ENCODE measurements at regions of chr21 and their contacts with region 1.

Region 1: DNA sequence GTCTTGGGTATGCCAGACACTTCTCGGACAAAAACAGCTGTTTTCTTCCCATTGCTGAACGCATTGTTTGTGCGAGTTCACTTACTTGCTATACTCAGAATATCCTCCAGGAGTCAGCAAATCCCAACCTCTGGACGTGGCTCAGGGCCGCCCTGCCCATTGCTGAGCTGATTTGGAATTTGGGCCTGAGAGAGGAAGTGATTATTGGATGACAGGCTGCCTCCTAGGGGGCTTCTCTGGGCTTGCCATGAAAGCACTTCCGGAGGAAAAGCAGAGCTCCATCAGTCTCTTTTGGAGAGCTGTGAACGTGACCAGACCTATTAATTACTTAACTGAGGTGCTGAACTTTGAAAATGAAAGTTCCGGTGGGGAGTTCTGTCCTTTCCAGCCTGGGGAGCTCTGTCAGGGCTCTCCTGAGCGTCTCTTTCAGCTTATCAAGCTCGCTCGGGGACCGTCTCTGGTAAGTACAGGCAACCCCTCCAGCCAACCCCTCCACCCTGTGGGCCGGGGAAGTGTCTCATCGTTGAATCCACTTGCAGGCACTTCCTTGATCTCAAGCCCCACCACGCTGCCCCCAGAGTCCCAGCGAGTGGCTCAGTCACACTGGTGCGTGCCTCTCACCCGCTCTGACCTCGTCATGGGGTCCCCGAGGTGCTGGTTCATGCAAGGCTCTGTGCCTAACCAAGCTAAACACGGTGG is 76.9 kb downstream of the CLIC6 start:
- DNase-seq: peak; percentile 12 to 77 (median 38)
- ATAC-seq: peak; percentile 73
- H3K4me3 ChIP-seq: no peak overlapping the region
- H3K4me3 Mint-ChIP-seq: peak overlapping the region; percentile 74
- H3K27ac ChIP-seq: no peak overlapping the region
- H3K27ac Mint-ChIP-seq: no peak overlapping the region
- H3K4me1 ChIP-seq: peaks cover 8% of the 10 kb centered on the region
- H3K4me1 Mint-ChIP-seq: peaks cover 5% of the 10 kb centered on the region
- H3K27me3 ChIP-seq: no peaks in the 10 kb centered on the region
- H3K27me3 Mint-ChIP-seq: no peaks in the 10 kb centered on the region
- CTCF ChIP-seq: peak; percentile 88

Region 2: GRCh38 chr21:35342440-35342839 is 596.7 kb after region 1 on chr21:
- CTCF ChIA-PET with region 1: no interaction called
- POLR2A ChIA-PET with region 1: no interaction called
- intact Hi-C with region 1: loop called in 1 of 2 experiments (anchors 5 kb)
- DNase-seq: no peak
- ATAC-seq: no peak
- H3K4me3 ChIP-seq: no peak overlapping the region
- H3K4me3 Mint-ChIP-seq: peak overlapping the region; percentile 18
- H3K27ac ChIP-seq: no peak overlapping the region
- H3K27ac Mint-ChIP-seq: no peak overlapping the region
- H3K4me1 ChIP-seq: no peaks in the 10 kb centered on the region
- H3K4me1 Mint-ChIP-seq: peaks cover 5% of the 10 kb centered on the region
- H3K27me3 ChIP-seq: peaks cover 0 to 3% of the 10 kb centered on the region in 2 experiments
- H3K27me3 Mint-ChIP-seq: no peaks in the 10 kb centered on the region
- CTCF ChIP-seq: no peak

Region 3: DNA sequence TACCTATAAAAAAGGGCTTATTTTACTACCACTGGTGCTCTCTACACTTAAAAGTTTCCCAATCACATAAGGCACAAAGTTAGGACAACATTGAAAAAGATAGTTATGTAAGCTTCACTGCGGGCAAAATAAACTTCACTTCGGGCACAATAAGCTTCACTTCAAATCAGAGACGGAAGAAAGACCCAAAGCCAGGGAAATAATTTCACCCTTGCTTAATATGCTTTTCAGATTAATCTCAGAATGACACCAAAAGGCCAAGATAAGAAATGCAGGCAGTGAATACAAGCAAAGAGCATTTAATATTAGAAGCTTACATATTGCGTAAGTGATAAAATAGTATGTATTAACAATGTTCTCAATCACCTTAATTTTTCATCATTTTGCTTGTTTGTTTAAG is 870.4 kb after region 1 on chr21:
- CTCF ChIA-PET with region 1: no interaction called
- POLR2A ChIA-PET with region 1: no interaction called
- intact Hi-C with region 1: loop called in 1 of 2 experiments (anchors 2 kb)
- DNase-seq: peak in 3 of 14 experiments; percentile 14 to 32 (median 26)
- ATAC-seq: no peak
- H3K4me3 ChIP-seq: no peak overlapping the region
- H3K4me3 Mint-ChIP-seq: no peak overlapping the region
- H3K27ac ChIP-seq: no peak overlapping the region
- H3K27ac Mint-ChIP-seq: no peak overlapping the region
- H3K4me1 ChIP-seq: no peaks in the 10 kb centered on the region
- H3K4me1 Mint-ChIP-seq: peaks cover 4% of the 10 kb centered on the region
- H3K27me3 ChIP-seq: no peaks in the 10 kb centered on the region
- H3K27me3 Mint-ChIP-seq: no peaks in the 10 kb centered on the region
- CTCF ChIP-seq: peak; percentile 24

Region 4: DNA sequence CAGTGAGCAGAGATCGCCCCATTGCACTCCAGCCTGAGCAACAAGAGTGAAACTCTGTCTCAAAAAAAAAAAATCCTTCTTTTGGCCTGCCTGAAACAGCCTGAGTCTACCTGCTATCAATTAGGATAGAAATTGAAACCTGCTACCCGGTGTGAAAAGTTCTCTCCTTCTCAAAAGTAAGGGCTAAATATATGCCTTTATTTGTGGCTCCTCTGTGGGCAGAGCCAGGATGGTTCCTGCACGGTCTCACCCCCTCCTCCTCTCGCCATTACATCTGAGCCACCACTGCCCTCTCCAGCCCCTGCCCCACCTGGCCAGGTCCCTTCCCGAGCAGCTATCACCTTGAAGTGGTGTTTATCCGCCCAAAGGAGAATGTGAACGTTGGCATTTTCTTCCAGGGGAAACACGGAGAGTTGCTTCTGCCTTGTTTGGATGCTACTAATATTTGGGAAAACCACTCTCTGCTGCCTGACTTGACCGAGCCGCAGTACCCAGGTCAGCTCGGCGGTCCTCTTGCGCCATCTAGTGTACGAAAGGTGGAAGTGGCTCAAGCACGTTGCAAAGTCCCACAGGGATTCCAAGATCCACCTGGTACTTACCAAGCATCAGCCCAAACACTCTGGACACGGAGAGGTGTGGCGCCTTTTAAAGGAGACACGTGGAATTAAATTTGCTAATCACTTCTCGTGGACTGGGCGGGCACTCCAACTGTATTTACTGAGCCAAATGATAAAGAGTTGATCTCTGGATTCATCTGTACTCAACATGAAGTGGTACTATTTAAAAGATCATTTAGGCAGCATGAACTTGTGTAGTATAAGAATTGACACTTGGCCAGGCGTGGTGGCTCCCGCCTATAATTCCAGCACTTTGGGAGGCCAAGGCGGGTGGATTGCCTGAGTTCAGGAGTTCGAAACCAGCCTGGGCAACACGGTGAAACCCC is 1282.7 kb after region 1 on chr21:
- CTCF ChIA-PET with region 1: interaction called, 12 read pairs
- POLR2A ChIA-PET with region 1: interaction called, 4 read pairs
- intact Hi-C with region 1: loop called (anchors 1 kb)
- DNase-seq: peak; percentile 25 to 85 (median 56)
- ATAC-seq: peak; percentile 80
- H3K4me3 ChIP-seq: no peak overlapping the region
- H3K4me3 Mint-ChIP-seq: no peak overlapping the region
- H3K27ac ChIP-seq: no peak overlapping the region
- H3K27ac Mint-ChIP-seq: no peak overlapping the region
- H3K4me1 ChIP-seq: peaks cover 5% of the 10 kb centered on the region
- H3K4me1 Mint-ChIP-seq: peaks cover 5% of the 10 kb centered on the region
- H3K27me3 ChIP-seq: no peaks in the 10 kb centered on the region
- H3K27me3 Mint-ChIP-seq: no peaks in the 10 kb centered on the region
- CTCF ChIP-seq: peak; percentile 95